Thyroid gland (tissue), 4 donors: ENCODE measurements at regions of chr9 and their contacts with region 1.

Region 1: GRCh38 chr9:93302551-93303257 is 118.8 kb downstream of the WNK2 start:
- DNase-seq: peak; percentile 55 to 68
- H3K4me3 ChIP-seq: no peak overlapping the region
- H3K27ac ChIP-seq: no peak overlapping the region
- H3K4me1 ChIP-seq: no peaks in the 10 kb centered on the region
- H3K27me3 ChIP-seq: no peaks in the 10 kb centered on the region
- CTCF ChIP-seq: peak in 4 of 6 experiments; percentile 35 to 61 (median 54)
- POLR2A ChIP-seq: no peak

Region 2: GRCh38 chr9:93111371-93112115 is 191.2 kb before region 1 on chr9:
- intact Hi-C with region 1: loop called (anchors 5 kb)
- DNase-seq: peak in 1 of 2 donors; percentile 3
- H3K4me3 ChIP-seq: no peak overlapping the region
- H3K27ac ChIP-seq: no peak overlapping the region
- H3K4me1 ChIP-seq: peaks cover 7 to 15% of the 10 kb centered on the region in 2 donors
- H3K27me3 ChIP-seq: no peaks in the 10 kb centered on the region
- CTCF ChIP-seq: no peak
- POLR2A ChIP-seq: no peak

Region 3: DNA sequence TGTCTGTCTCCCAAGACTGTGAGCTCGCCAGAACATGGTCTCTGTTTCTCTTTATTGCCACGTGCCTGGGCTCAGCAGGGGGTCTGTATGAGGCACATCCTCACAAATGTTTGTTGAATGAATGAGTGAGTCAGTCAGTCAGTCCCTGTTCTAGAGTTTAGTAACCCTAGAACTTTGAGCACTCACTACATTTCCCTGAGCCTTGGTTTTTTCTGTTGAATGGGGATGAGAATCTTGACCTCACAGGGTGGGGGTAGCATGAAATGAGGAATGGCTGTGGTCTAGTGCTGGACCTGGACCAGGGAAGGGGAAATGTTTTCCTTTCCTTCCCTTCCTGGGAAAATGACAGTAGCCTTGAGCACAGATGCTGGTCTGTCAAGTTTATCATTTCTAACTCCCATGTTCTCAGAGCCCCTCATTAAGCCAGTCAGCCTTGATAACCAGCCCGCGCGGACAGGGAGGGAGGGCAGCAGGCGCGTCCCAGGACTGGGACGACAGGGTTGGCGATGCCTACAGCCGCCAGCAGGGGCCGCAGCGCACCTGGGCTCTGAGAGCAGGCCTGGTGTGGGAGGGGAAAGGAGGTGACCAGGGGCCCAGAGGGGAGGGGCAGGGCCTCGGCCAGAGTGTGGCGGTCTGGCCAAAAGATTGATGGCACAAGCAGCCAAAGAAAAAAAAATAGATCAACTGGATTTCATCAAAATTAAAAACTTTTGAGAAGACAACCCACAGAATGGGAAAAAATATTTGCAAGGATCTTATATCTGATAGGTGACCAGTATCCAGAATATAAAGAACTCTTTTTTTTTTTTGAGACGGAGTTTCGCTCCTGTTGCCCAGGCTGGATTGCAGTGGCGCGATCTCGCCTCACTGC is 142.9 kb before region 1 on chr9:
- intact Hi-C with region 1: loop called (anchors 2 kb)
- DNase-seq: peak; percentile 93 to 94
- H3K4me3 ChIP-seq: no peak overlapping the region
- H3K27ac ChIP-seq: no peak overlapping the region
- H3K4me1 ChIP-seq: peaks cover 4 to 6% of the 10 kb centered on the region in 2 donors
- H3K27me3 ChIP-seq: no peaks in the 10 kb centered on the region
- CTCF ChIP-seq: peak; percentile 86 to 99 (median 99)
- POLR2A ChIP-seq: no peak